ENCODE measurements at regions of chr12 and their contacts with region 1.

Region 1: DNA sequence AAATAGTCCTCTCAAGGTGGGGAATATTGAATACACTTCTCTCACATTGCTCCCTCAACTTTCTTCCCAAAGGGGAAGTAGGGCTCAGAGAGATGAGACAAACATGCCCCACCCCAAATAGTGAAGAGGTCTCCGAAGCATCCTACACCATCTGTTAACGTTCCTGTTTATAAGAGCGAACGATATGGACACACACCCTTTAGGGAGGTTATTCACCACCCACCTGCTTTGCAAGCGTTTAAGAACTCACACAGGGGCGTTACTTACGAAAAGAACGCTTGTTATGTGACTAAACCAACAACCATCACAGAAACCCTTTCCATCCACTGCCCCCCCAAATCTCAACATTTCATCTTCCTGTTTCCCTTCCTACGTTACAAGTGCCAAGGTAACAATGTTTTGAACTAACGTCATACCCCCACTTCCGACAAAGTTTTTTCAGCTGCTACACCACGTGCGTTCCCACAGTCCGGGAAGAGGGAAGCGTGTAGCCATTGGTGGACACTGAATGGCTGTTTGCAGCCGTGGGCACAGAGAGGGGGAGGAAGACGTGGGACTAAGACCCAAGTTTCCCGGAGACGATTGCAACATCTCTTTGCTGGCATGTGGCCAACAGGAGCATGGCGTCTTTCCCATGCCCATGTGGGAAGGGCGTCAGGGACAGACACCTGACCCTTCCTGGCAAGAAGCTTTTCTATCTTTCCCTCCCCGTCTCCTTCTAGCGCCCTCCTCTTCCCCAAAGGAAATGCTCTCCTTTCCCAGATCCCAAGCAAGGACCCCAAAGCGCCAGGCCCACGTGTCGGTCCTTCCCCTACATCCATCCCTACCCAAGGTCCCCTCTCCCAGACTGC is 1.2 kb downstream of the YBX3 start:
- DNase-seq: peak; percentile 8
- H3K4me3 ChIP-seq: peak overlapping the region; percentile 70 to 97 (median 92)
- H3K27ac ChIP-seq: peak overlapping the region; percentile 98 to 100 (median 99)
- H3K4me1 ChIP-seq: peaks cover 11 to 65% (median 36%) of the 10 kb centered on the region in 3 donors
- H3K27me3 ChIP-seq: no peaks in the 10 kb centered on the region
- CTCF ChIP-seq: no peak
- POLR2A ChIP-seq: peak in 2 of 4 donors; percentile 5 to 30

Region 2: GRCh38 chr12:10613349-10614055 is 108.4 kb before region 1 on chr12 and contains the start of gene MAGOHB:
- intact Hi-C with region 1: loop called (anchors 10 kb)
- DNase-seq: peak; percentile 71
- H3K4me3 ChIP-seq: peak within 1 kb of the TSS; percentile 62 to 92 (median 73)
- H3K27ac ChIP-seq: peak within 1 kb of the TSS; percentile 87 to 96 (median 90)
- H3K4me1 ChIP-seq: peaks cover 0 to 26% (median 11%) of the 10 kb centered on the region in 3 donors
- H3K27me3 ChIP-seq: no peaks in the 10 kb centered on the region
- CTCF ChIP-seq: peak in 2 of 6 experiments; percentile 10 to 62
- POLR2A ChIP-seq: peak in 3 of 4 donors; percentile 55 to 81 (median 67)
- total RNA-seq, gene MAGOHB: 5.4 to 25.1 (median 9.8) TPM

Region 3: GRCh38 chr12:10829994-10830393 is 108.1 kb after region 1 on chr12:
- intact Hi-C with region 1: no loop called
- DNase-seq: no peak
- H3K4me3 ChIP-seq: no peak overlapping the region
- H3K27ac ChIP-seq: no peak overlapping the region
- H3K4me1 ChIP-seq: no peaks in the 10 kb centered on the region
- H3K27me3 ChIP-seq: no peaks in the 10 kb centered on the region
- CTCF ChIP-seq: no peak
- POLR2A ChIP-seq: no peak

Measured in esophagus squamous epithelium (tissue), 5 donors.